HepG2 (cell line): ENCODE measurements at regions of chr15 and their contacts with region 1.

Region 1: GRCh38 chr15:78618490-78618934 is 2.3 kb downstream of the CHRNA3 start:
- DNase-seq: peak; percentile 66
- ATAC-seq: peak; percentile 64
- H3K4me3 ChIP-seq: no peak overlapping the region
- H3K27ac ChIP-seq: no peak overlapping the region
- H3K4me1 ChIP-seq: no peaks in the 10 kb centered on the region
- H3K27me3 ChIP-seq: peaks cover 3 to 42% of the 10 kb centered on the region in 2 experiments; a peak in 4 of 5 replicates
- CTCF ChIP-seq: peak; percentile 81
- EP300 ChIP-seq: no peak
- POLR2A ChIP-seq: no peak
- RAD21 ChIP-seq: peak; percentile 59

Region 2: DNA sequence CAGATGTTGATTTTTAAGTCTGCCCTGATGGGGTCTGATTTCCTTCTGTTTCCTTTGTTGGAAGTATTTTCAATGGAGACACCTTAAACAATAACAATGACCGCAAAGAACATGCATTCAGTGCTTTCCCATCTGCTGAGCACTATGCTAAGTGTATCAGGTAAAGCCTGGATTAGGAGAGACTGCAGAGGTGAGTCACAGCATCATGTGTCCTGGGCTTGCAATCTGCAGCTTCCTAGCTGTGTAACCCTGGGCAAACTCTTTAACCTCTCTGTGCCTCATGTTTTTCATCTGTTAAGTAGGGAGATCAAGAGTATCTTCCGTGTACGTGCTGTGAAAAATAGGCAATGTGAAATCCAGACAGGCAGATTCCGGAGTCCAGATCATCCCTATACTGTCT is 35.8 kb after region 1 on chr15:
- CTCF ChIA-PET with region 1: no interaction called
- POLR2A ChIA-PET with region 1: no interaction called
- in situ Hi-C with region 1: no loop called
- intact Hi-C with region 1: no loop called
- DNase-seq: no peak
- ATAC-seq: no peak
- H3K4me3 ChIP-seq: no peak overlapping the region
- H3K27ac ChIP-seq: no peak overlapping the region
- H3K4me1 ChIP-seq: no peaks in the 10 kb centered on the region
- H3K27me3 ChIP-seq: peaks cover 3 to 11% of the 10 kb centered on the region in 2 experiments; a peak in 2 of 5 replicates
- CTCF ChIP-seq: no peak
- EP300 ChIP-seq: no peak
- POLR2A ChIP-seq: no peak
- RAD21 ChIP-seq: no peak

Region 3: DNA sequence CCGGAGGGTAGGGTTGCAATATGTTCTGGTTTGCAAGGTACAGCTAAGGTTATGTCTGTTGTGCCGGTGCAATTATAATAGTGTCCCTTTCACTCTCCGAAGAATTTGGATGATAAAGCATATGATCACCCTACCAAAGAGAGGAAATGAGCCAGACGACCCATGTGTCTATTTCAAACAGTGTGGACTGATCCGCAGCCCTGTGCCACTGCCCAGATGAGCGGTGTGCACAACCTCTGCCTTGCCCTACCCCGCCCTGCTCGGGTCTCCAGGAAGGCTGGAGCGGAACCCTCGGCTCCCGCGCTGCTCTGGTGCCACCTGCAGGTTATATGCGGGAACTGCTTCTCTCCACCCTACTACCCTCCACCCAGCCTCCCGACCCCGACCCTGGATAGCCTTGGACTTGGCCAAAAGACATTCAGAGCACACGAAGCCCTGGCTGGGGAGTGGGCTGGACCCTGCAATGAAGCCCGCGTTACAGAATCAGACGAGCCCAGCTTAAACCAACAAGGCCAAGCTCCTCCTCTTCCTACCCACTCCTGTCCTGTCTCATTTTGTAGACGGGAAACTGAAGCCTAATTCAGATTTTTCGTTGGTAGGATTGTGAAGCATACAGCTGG is 90.9 kb after region 1 on chr15:
- CTCF ChIA-PET with region 1: interaction called, 20 read pairs
- POLR2A ChIA-PET with region 1: no interaction called
- in situ Hi-C with region 1: no loop called
- intact Hi-C with region 1: loop called (anchors 1 kb)
- DNase-seq: peak; percentile 39
- ATAC-seq: peak; percentile 98
- H3K4me3 ChIP-seq: no peak overlapping the region
- H3K27ac ChIP-seq: no peak overlapping the region
- H3K4me1 ChIP-seq: peaks cover 6% of the 10 kb centered on the region
- H3K27me3 ChIP-seq: no peaks in the 10 kb centered on the region
- CTCF ChIP-seq: peak; percentile 90
- EP300 ChIP-seq: no peak
- POLR2A ChIP-seq: no peak
- RAD21 ChIP-seq: peak; percentile 95

Region 4: DNA sequence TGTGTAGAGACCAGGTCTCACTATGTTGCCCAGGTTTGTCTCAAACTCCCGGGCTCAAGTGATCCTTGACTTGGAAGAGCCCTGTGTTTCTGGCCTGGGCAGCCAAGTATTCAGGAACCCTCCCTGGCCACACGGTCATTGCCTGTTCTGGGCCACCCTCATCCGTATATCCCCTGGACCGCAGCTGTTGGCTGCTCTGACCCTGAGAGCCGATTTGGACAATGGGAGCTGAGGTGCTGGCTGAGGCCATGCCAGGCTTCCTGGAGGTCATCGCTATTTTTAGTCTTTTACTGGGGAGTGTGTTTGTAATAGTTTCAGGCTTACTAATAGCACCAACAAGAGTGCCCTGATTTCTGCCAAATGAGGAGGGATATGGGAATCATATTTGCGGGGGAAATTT is 132.1 kb after region 1 on chr15:
- CTCF ChIA-PET with region 1: interaction called, 13 read pairs
- POLR2A ChIA-PET with region 1: no interaction called
- in situ Hi-C with region 1: no loop called
- intact Hi-C with region 1: loop called (anchors 1 kb)
- DNase-seq: no peak
- ATAC-seq: no peak
- H3K4me3 ChIP-seq: no peak overlapping the region
- H3K27ac ChIP-seq: no peak overlapping the region
- H3K4me1 ChIP-seq: peaks cover 12% of the 10 kb centered on the region
- H3K27me3 ChIP-seq: peaks cover 1 to 18% of the 10 kb centered on the region in 2 experiments; a peak in 4 of 5 replicates
- CTCF ChIP-seq: no peak
- EP300 ChIP-seq: no peak
- POLR2A ChIP-seq: no peak
- RAD21 ChIP-seq: no peak

Region 5: GRCh38 chr15:78761891-78762385 is 143.4 kb after region 1 on chr15:
- CTCF ChIA-PET with region 1: no interaction called
- POLR2A ChIA-PET with region 1: no interaction called
- in situ Hi-C with region 1: no loop called
- intact Hi-C with region 1: no loop called
- DNase-seq: no peak
- ATAC-seq: no peak
- H3K4me3 ChIP-seq: no peak overlapping the region
- H3K27ac ChIP-seq: no peak overlapping the region
- H3K4me1 ChIP-seq: no peaks in the 10 kb centered on the region
- H3K27me3 ChIP-seq: peaks cover 0 to 9% of the 10 kb centered on the region in 2 experiments; a peak in 1 of 5 replicates
- CTCF ChIP-seq: no peak
- EP300 ChIP-seq: no peak
- POLR2A ChIP-seq: no peak
- RAD21 ChIP-seq: no peak

Region 6: GRCh38 chr15:78775472-78775871 is 157.0 kb after region 1 on chr15:
- CTCF ChIA-PET with region 1: no interaction called
- POLR2A ChIA-PET with region 1: no interaction called
- in situ Hi-C with region 1: no loop called
- intact Hi-C with region 1: no loop called
- DNase-seq: no peak
- ATAC-seq: no peak
- H3K4me3 ChIP-seq: no peak overlapping the region
- H3K27ac ChIP-seq: no peak overlapping the region
- H3K4me1 ChIP-seq: no peaks in the 10 kb centered on the region
- H3K27me3 ChIP-seq: peaks cover 2 to 6% of the 10 kb centered on the region in 2 experiments; a peak in 3 of 5 replicates
- CTCF ChIP-seq: no peak
- EP300 ChIP-seq: no peak
- POLR2A ChIP-seq: no peak
- RAD21 ChIP-seq: no peak